ENCODE measurements at regions of chr6 and their contacts with region 1.

Region 1: GRCh38 chr6:73515204-73515655 is 5.6 kb downstream of the EEF1A1 start:
- DNase-seq: no peak
- ATAC-seq: peak; percentile 19
- H3K4me3 ChIP-seq: peak overlapping the region; percentile 49 to 86
- H3K27ac ChIP-seq: peak overlapping the region; percentile 83
- H3K4me1 ChIP-seq: peaks cover 28% of the 10 kb centered on the region
- H3K27me3 ChIP-seq: no peaks in the 10 kb centered on the region
- CTCF ChIP-seq: no peak; the same call in 1 of the 2 replicates

Region 2: GRCh38 chr6:73461537-73462350 is 53.5 kb before region 1 on chr6 and contains the start of gene MTO1:
- CTCF ChIA-PET with region 1: no interaction called
- POLR2A ChIA-PET with region 1: interaction called, 20 read pairs
- in situ Hi-C with region 1: no loop called
- intact Hi-C with region 1: no loop called
- DNase-seq: peak; percentile 76
- ATAC-seq: peak; percentile 97
- H3K4me3 ChIP-seq: peak within 1 kb of the TSS; percentile 84 to 97
- H3K27ac ChIP-seq: peak within 1 kb of the TSS; percentile 87
- H3K4me1 ChIP-seq: peaks cover 2% of the 10 kb centered on the region; the same call in 1 of the 2 replicates
- H3K27me3 ChIP-seq: no peaks in the 10 kb centered on the region
- CTCF ChIP-seq: no peak
- total RNA-seq, gene MTO1: 57.9 TPM

Region 3: DNA sequence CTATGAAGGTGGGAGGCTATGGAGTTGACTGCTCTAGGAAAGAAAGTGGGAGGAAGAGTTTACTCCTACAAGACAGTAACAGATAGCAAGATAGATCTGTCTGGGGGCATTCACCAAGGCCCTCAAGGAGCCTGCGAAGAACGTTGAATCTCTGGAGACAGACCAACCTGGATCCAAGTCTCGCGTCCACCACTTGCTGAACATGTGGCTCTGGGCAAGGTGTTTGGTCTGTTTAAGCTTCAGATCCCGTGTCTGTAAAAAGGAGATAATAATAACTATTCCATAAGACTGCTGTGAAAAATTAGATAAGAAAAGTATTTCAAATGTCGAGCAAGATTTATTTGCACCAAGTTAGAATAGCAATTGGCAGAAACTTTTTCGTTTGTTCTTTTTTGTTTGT is 13.7 kb after region 1 on chr6:
- CTCF ChIA-PET with region 1: no interaction called
- POLR2A ChIA-PET with region 1: no interaction called
- in situ Hi-C with region 1: no loop called
- intact Hi-C with region 1: no loop called
- DNase-seq: no peak
- ATAC-seq: peak; percentile 45; the same call in 1 of the 2 replicates
- H3K4me3 ChIP-seq: no peak overlapping the region
- H3K27ac ChIP-seq: peak overlapping the region; percentile 30
- H3K4me1 ChIP-seq: peaks cover 16% of the 10 kb centered on the region
- H3K27me3 ChIP-seq: no peaks in the 10 kb centered on the region
- CTCF ChIP-seq: no peak

Region 4: DNA sequence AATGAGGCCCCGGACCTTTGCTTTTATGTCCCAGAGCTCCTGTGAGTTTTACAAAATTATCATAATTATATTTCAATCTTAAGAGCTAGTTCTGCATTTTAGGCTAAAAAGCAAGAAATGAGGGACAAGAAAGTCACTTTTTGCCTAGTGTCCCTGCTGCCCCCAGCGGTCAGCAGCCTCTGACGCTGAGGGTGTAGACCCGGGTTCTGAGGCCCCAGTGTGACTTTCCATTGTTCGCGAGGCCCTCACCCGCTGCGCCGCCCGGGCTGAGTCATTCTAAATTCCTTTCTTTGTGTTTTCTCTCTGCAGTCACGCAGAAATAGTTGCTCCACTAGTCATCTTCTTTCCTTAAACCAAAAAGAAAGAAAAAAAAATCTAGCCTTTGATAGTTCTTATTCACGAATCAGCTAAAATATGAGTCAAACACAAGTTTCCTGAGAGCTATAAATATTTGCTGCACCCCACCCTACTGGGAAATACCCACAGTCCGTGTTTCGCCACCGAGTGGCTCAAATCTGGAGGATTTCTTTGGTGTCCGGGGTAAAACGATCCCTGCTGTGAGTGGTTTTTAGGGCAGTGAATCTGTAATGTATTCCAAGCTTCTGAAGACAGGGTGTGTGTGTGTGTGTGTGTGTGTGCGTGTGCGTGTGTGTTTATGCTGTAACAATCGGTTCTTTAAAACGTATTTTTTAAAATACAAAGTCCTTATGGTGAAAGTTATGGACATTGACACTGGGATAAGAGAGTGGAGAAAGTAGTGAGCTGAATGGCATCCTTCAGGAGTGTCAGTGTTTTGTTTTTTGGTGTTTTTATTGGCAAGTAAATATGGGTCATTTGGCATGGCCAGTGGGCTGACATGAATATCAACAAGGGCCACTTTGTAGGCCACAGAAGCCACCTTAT is 65.3 kb after region 1 on chr6:
- CTCF ChIA-PET with region 1: interaction called, 7 read pairs
- POLR2A ChIA-PET with region 1: interaction called, 31 read pairs
- in situ Hi-C with region 1: no loop called
- intact Hi-C with region 1: loop called (anchors 2 kb)
- DNase-seq: peak; percentile 98
- ATAC-seq: peak; percentile 93
- H3K4me3 ChIP-seq: peak overlapping the region; percentile 26 to 55
- H3K27ac ChIP-seq: peak overlapping the region; percentile 100
- H3K4me1 ChIP-seq: peaks cover 49% of the 10 kb centered on the region
- H3K27me3 ChIP-seq: no peaks in the 10 kb centered on the region
- CTCF ChIP-seq: peak; percentile 90

Region 5: GRCh38 chr6:73610444-73611275 is 95.4 kb after region 1 on chr6:
- CTCF ChIA-PET with region 1: interaction called, 4 read pairs
- POLR2A ChIA-PET with region 1: interaction called, 20 read pairs
- in situ Hi-C with region 1: no loop called
- intact Hi-C with region 1: loop called (anchors 1 kb)
- DNase-seq: peak; percentile 63
- ATAC-seq: peak; percentile 77
- H3K4me3 ChIP-seq: no peak overlapping the region; a peak in 1 of 4 replicates
- H3K27ac ChIP-seq: peak overlapping the region; percentile 72
- H3K4me1 ChIP-seq: peaks cover 19% of the 10 kb centered on the region
- H3K27me3 ChIP-seq: no peaks in the 10 kb centered on the region
- CTCF ChIP-seq: peak; percentile 80; the same call in 1 of the 2 replicates

Region 6: DNA sequence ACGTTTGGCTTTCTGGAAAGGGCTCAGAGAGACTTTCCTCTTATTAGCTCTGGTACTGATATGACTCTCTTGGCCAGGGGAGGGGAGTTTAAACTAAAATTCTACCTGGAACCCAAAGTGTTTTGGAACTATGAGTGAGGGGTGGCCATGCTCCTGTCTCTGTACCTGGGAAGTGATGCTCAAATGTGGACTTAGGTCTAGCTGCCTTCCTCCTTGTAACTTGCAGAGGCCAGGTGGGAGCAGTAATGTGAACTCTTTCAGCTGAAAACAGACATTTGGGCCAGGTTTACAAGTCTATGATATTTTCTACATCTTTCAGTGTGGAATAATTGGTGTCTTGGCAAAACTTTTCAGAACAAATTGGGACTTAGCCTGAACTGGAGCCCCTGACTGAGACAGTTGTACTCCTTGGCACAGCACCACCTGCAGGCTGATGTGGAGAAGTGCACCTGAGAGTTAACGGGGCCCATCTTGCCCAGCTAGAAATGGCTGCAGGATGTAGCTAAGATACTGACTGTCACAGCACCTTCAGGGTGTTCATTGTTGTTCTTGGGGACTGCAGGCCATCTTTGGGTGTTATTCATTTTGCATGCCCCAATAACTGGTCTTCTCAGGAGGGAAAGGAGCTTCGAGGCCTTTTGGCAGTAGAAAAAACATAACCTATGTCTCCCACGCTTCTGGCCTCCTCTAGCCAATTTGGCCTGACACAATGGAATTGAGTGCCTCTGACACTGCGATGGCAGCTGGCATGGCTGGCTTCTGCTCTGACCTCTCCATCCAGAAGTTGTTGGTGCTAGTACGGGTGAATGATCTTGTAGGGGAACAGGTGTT is 217.8 kb after region 1 on chr6:
- CTCF ChIA-PET with region 1: no interaction called
- POLR2A ChIA-PET with region 1: interaction called, 14 read pairs
- in situ Hi-C with region 1: no loop called
- intact Hi-C with region 1: no loop called
- DNase-seq: no peak
- ATAC-seq: peak; percentile 91
- H3K4me3 ChIP-seq: no peak overlapping the region
- H3K27ac ChIP-seq: no peak overlapping the region
- H3K4me1 ChIP-seq: no peaks in the 10 kb centered on the region
- H3K27me3 ChIP-seq: no peaks in the 10 kb centered on the region
- CTCF ChIP-seq: peak; percentile 92

Measured in Panc1 (cell line).